HAP-1 (cell line): ENCODE measurements at regions of chr7 and their contacts with region 1.

Region 1: GRCh38 chr7:143214789-143215679 is 6.8 kb upstream of the TAS2R40 start:
- DNase-seq: peak; percentile 72 to 85
- H3K4me3 ChIP-seq: no peak overlapping the region
- H3K4me1 ChIP-seq: no peaks in the 10 kb centered on the region; the same call in 1 of the 2 replicates
- H3K27me3 ChIP-seq: 0 out of 2 replicates have a peak, but pooled peaks cover 2% of the 10 kb centered on the region

Region 2: DNA sequence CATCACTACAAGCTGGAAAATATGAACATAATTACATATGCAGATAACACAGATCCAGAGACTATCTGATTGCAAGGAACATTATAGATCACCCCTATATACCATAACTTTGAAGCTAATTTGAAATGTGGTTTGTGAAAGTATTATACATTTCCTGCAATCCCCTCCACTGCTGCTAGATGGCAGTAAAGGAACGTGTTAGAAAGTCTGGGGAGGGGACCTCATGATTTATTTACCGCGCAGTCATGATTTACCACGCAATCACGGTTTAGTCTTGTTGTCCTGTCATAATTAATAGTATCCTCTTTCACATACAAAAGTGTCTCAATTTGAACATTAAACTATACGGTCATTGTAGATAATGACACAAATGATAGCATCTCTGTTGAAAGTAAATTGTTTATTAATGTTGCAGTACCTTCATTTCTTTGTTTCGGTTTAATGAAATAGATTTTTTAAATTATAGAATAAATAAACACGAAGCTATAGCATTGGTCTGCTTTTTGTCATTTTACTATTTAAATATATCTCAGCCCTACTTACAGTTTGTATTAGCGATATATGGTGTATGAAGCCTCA is 611.1 kb before region 1 on chr7:
- in situ Hi-C with region 1: loop called (anchors 25 kb)
- DNase-seq: peak; percentile 44 to 72
- H3K4me3 ChIP-seq: no peak overlapping the region
- H3K4me1 ChIP-seq: no peaks in the 10 kb centered on the region
- H3K27me3 ChIP-seq: peaks cover 11% of the 10 kb centered on the region

Region 3: DNA sequence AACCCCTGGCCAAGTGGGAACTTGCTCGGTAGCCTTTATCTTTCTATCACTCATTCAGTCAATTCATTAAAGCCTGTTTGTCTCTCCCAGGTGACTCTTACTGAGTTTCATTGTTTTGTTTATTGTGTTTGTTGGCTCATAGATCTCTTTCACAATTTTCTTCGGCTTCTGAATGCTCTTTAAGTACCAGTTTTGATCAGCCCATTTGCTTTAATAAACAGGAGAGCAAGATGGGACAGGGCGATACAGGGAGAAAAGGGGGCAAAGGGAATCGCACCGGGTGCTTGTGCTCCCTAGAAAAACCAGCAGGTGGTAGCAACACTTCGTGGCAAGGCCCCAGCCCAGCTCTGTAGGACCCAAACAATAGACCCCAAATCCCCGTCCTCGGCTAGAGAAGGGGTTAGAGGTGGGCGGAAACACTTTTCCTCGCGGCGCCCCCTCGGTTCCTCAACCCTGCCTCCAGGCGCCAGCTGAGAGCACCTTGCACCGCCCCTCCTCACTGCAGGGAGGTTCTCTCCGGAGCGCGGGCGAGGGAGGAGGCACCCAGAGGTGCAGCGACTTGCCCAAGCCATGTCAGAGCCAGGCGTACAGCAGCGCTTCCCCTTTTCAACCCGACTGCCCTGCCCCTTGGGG is 361.2 kb before region 1 on chr7:
- in situ Hi-C with region 1: loop called (anchors 10 kb)
- DNase-seq: peak; percentile 76 to 81
- H3K4me3 ChIP-seq: peak overlapping the region; percentile 42
- H3K4me1 ChIP-seq: no peaks in the 10 kb centered on the region
- H3K27me3 ChIP-seq: peaks cover 8% of the 10 kb centered on the region

Region 4: DNA sequence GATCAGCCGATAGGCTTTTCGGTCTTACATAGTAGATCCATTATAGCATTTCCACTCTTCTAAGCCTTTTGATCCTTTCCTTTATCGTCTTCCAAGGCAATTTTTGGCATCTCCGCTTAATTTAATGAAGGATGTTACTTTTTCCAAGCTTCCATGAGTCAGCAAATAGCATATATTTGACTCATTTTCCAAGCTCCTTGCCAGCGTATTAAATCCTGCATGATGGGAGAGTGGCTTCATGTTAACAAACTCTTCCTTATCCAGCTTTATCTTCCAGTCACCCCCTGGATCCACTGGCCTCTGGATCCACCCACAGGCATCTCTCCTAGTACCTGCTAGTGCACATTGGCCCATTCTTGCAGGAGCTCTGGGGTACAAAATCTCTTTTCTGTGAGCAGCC is 201.1 kb before region 1 on chr7:
- in situ Hi-C with region 1: loop called (anchors 5 kb)
- DNase-seq: no peak
- H3K4me3 ChIP-seq: no peak overlapping the region
- H3K4me1 ChIP-seq: no peaks in the 10 kb centered on the region
- H3K27me3 ChIP-seq: no peaks in the 10 kb centered on the region

Region 5: DNA sequence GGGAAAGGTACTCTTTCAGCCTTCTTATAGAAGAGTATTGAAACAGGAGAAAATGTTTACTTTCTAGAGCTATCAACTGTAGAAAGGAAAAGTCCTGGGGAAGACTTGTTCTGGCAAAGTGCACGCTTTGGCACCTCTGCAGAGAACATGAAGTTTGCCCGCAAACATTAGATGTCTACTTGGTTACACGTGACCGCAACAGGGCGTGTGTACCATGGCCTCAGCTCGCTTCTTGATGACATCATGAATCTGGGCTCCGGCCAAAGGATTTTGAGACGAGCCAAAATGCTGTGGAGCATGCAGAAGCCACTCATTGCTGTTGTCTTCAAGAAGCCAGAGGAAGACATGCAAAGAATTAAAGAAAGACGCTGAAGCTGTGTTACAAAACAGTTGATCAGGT is 219.6 kb after region 1 on chr7:
- in situ Hi-C with region 1: no loop called
- DNase-seq: no peak
- H3K4me3 ChIP-seq: no peak overlapping the region
- H3K4me1 ChIP-seq: 0 out of 2 replicates have a peak, but pooled peaks cover 3% of the 10 kb centered on the region
- H3K27me3 ChIP-seq: no peaks in the 10 kb centered on the region